Natural killer cell (primary cell): ENCODE measurements at regions of chr12 and their contacts with region 1.

Region 1: DNA sequence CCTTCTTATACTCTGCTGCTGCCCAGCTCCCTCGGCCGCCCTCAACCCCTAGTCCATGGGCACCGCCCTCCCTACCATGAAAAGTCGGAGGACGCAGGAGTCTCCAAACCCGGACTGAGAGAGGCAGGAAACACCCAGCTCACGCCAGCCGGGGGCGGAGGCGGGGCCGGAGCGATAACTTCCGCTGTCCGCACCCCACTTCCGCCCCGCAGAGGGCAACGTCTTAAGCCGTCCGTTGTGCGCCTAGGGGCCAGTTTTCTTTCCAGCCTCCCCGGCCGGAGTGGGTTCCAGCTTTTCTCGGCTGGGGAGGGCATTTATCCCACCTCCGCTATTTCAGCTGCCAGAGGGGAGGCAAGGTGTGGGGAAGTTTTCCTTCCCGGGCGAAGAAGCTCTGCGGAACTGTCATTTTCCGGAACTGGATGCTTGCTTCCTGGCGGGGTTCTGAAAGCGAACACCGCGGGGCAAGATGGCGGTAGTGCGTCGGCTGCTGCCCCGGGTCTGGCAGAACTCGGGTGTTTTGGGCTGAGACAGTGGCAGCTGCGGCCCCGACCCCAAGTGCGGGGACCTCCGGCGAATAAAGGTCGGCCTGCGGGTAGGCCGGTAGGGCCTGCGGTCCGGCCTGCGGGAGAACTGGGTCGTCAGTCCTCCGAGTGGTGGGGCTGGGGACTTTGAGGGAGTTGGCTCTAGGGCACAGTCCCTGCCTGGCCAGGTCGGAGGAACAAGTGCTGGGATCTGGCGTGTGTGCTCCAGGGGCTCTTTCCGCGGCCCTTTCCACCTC is at the starts of genes KCTD10 and UBE3B:
- DNase-seq: peak; percentile 90 to 94
- ATAC-seq: peak; percentile 93 to 96 (median 94)
- H3K4me3 ChIP-seq: peak within 1 kb of the TSS; percentile 93
- H3K4me3 Mint-ChIP-seq: peak within 1 kb of the TSS; percentile 94
- H3K27ac ChIP-seq: peak within 1 kb of the TSS; percentile 81
- H3K27ac Mint-ChIP-seq: peak within 1 kb of the TSS; percentile 95
- H3K4me1 ChIP-seq: peaks cover 21% of the 10 kb centered on the region
- H3K4me1 Mint-ChIP-seq: peaks cover 50 to 58% of the 10 kb centered on the region in 2 donors
- H3K27me3 ChIP-seq: no peaks in the 10 kb centered on the region
- H3K27me3 Mint-ChIP-seq: no peaks in the 10 kb centered on the region
- CTCF ChIP-seq: no peak
- total RNA-seq, gene KCTD10: 76.0 to 141 (median 79.0) TPM
- total RNA-seq, gene UBE3B: 32.2 to 46.7 (median 39.5) TPM

Region 2: GRCh38 chr12:109428037-109428629 is 49.2 kb before region 1 on chr12:
- intact Hi-C with region 1: loop called (anchors 2 kb)
- DNase-seq: peak; percentile 77 to 85
- ATAC-seq: peak; percentile 88 to 96 (median 93)
- H3K4me3 ChIP-seq: no peak overlapping the region
- H3K4me3 Mint-ChIP-seq: no peak overlapping the region
- H3K27ac ChIP-seq: no peak overlapping the region
- H3K27ac Mint-ChIP-seq: no peak overlapping the region
- H3K4me1 ChIP-seq: peaks cover 7% of the 10 kb centered on the region
- H3K4me1 Mint-ChIP-seq: peaks cover 7 to 9% of the 10 kb centered on the region in 2 donors
- H3K27me3 ChIP-seq: no peaks in the 10 kb centered on the region
- H3K27me3 Mint-ChIP-seq: peaks cover 2 to 9% of the 10 kb centered on the region in 2 donors
- CTCF ChIP-seq: peak; percentile 90